Naive thymus-derived CD4-positive, alpha-beta T cell (primary cell): ENCODE measurements at regions of chr1 and their contacts with region 1.

Region 1: GRCh38 chr1:246860401-246860800 is 71.3 kb downstream of the AHCTF1 start:
- DNase-seq: no peak
- ATAC-seq: no peak
- H3K4me3 ChIP-seq: no peak overlapping the region
- H3K4me3 Mint-ChIP-seq: no peak overlapping the region
- H3K27ac ChIP-seq: no peak overlapping the region
- H3K27ac Mint-ChIP-seq: peak overlapping the region in 1 of 9 donors; percentile 43
- H3K4me1 ChIP-seq: no peaks in the 10 kb centered on the region
- H3K4me1 Mint-ChIP-seq: peaks cover 0 to 4% (median 0%) of the 10 kb centered on the region in 7 donors
- H3K27me3 ChIP-seq: no peaks in the 10 kb centered on the region
- H3K27me3 Mint-ChIP-seq: no peaks in the 10 kb centered on the region

Region 2: DNA sequence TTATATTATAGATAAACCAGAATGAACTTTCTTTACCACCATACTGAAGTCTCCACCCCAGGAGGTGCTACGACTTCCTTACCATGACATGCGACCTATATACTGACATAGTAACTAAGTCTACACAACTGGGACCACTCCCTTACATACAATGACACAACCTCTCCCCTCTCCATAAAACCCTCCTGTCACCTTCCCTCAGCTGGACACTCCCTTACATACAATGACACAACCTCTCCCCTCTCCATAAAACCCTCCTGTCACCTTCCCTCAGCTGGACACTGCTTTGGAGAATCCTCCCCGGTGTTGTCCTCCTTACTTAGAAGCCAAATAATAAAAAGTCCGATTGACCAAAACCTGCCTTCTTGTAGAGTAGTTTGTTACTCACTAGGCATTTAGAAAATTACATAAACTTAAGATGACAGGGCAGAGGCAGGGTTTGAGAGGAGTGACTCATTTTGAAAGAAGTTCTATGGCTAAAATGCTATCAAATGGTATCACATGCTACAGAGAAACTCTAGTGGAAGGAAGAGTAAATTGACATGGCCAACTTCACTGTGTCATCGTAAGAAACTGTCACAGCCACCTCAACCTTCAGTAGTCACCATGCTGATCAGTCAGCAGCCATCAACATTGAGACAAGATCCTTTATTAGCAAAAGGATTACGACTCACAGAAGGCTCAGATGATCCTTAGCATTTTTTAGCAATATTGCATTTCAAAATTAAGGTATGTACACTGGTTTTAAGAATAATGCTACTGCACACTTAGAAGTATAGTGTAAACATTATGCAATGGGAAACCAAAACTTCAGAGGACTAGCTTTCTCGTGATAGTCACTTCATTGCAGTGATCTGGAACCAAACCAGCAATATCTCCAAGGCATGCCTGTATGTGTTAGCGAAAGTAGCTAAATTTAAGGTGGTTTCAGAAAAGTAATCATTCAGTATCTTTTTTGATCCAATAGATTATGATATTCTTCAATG is 14.9 kb after region 1 on chr1:
- CTCF ChIA-PET with region 1: no interaction called
- POLR2A ChIA-PET with region 1: no interaction called
- intact Hi-C with region 1: loop called in 1 of 2 experiments (anchors 2 kb)
- DNase-seq: no peak
- ATAC-seq: peak; percentile 41
- H3K4me3 ChIP-seq: no peak overlapping the region
- H3K4me3 Mint-ChIP-seq: no peak overlapping the region
- H3K27ac ChIP-seq: no peak overlapping the region
- H3K27ac Mint-ChIP-seq: peak overlapping the region in 5 of 9 donors; percentile 21 to 65 (median 38)
- H3K4me1 ChIP-seq: no peaks in the 10 kb centered on the region
- H3K4me1 Mint-ChIP-seq: peaks cover 8 to 38% (median 16%) of the 10 kb centered on the region in 7 donors
- H3K27me3 ChIP-seq: no peaks in the 10 kb centered on the region
- H3K27me3 Mint-ChIP-seq: no peaks in the 10 kb centered on the region